ENCODE measurements at regions of chr4 and their contacts with region 1.

Region 1: DNA sequence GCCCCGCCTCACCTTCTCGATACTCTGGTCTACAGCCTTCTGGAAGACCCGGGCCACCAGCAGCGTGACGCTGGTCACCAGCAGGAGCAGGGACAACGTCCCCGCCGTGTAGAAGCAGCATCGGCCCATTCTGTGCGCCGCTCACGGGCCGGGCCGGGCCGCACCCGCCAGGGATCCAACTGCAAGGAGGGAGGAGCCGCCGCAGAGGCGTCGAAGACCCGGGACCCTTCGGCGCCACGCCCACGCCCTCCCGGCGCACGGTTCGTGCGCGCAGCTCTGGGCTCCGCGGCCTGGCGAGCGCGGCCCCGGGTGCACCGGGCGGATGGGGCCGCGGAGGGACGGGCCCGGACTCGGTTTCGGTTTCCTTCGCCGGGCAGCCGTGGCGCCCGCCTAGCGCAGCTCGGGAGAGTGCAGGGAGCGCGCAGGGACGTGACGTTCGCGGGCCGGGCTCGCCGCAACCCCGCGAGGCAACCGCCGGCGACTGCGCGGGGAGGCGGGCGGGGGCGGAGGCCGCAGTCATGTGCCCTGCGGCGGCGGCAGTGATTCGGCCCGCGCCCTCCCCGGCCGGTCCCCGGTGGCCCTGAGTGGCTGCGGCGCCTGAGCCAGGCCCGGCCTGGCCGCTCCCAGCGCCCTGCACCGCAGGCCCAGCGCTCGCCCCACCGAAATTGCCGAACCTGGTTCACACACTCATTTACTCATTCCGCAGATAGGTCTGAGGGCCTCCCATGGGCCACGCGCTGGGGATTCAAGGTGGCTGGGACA is at the start of gene SCARB2:
- DNase-seq: peak; percentile 95
- H3K4me3 ChIP-seq: peak within 1 kb of the TSS; percentile 61 to 79 (median 73)
- H3K27ac ChIP-seq: peak within 1 kb of the TSS; percentile 93 to 99 (median 96)
- H3K4me1 ChIP-seq: peaks cover 0 to 57% (median 51%) of the 10 kb centered on the region in 4 donors
- H3K27me3 ChIP-seq: no peaks in the 10 kb centered on the region
- CTCF ChIP-seq: no peak
- EP300 ChIP-seq: no peak
- POLR2A ChIP-seq: peak; percentile 24 to 58
- total RNA-seq, gene SCARB2: 119 to 160 (median 141) TPM

Region 2: GRCh38 chr4:76067652-76068286 is 145.8 kb before region 1 on chr4:
- intact Hi-C with region 1: no loop called
- DNase-seq: peak; percentile 75
- H3K4me3 ChIP-seq: no peak overlapping the region
- H3K27ac ChIP-seq: no peak overlapping the region
- H3K4me1 ChIP-seq: peaks cover 0 to 4% (median 0%) of the 10 kb centered on the region in 4 donors
- H3K27me3 ChIP-seq: no peaks in the 10 kb centered on the region
- CTCF ChIP-seq: peak; percentile 46 to 77 (median 60)
- EP300 ChIP-seq: no peak
- POLR2A ChIP-seq: no peak

Region 3: DNA sequence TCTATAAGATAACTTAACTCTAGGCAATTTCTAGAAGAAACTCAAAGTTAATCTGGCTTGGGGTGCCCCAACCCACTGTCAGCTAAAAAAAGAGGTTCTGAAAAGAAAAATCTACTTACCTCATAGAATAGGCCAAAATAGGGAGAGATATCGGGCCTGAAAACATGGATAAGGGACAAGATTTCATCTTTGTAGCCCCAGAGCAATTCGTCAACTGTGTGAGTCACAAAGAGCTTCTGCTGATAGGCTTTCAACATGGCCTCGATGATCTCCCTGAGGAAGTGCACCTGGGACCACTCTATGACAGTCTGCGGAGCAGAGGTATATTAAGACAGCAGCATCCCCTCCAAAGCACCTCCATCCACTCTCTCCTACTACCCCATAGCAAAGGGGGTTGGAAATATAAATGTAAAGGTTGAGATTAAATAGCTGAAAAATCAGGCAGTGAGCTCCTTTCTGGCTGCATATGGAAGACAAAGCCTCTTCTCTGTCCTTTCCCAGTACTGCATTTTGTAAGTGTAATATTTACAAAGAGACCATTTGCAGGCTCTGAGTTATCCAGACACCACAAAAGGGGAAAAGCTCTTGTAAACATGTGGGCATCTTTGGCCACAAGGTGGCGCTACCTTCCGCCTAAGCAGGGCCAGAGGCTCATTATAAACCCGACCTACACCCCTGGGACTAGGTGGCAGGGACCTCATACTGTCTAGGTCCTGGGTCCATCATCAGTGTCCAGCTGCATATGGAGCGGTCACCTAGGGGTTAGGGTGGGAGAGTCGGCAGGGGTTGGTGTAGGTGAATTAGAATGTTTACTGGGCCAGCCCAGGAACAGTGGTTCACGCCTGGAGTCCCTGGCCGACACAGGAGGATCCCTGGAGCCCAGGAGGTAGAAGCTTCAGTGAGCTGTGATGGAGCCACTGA is 33.9 kb before region 1 on chr4:
- intact Hi-C with region 1: loop called (anchors 1 kb)
- DNase-seq: peak; percentile 92
- H3K4me3 ChIP-seq: no peak overlapping the region
- H3K27ac ChIP-seq: peak overlapping the region in 2 of 4 donors; percentile 34 to 37
- H3K4me1 ChIP-seq: peaks cover 0 to 17% (median 9%) of the 10 kb centered on the region in 4 donors
- H3K27me3 ChIP-seq: no peaks in the 10 kb centered on the region
- CTCF ChIP-seq: peak; percentile 71 to 96 (median 82)
- EP300 ChIP-seq: no peak
- POLR2A ChIP-seq: no peak

Region 4: DNA sequence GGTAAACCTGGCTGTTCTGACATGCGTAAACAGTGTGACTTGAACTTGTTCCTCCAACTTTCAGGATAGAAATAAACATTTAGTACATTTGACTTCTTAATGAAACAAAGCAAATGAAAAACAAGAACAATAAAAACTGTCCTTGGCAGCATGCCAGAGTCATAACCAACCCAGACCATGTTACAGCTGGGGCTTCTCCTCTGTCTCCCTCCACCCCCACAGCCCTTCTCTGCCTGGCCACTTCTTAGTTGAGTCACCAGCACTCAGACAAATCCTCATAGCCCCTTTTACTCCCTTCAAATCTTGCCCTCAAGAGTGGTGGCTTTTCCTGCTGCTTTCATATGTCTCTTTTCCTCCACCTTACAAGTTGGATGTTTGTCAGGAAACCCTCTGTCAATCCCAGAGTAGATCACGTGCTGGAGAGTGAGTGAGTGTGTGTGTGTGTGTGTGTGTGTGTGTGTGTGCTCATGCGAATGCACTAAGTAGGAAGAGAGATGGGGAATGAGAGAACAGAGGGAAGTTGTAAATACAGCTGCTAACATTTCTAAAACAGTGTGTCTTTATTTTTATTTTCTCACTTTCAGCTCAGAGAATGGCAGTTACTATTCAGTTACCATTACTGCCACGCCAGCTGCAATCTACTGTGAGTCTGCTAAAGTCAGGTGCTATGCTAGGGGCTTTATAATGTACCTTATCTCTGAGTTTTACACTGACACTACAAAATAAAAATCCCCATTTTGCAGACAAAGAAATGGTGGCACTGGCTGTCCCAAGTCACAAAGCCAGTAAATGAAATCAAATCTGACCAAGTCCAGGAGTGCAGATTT is 15.0 kb before region 1 on chr4:
- intact Hi-C with region 1: loop called (anchors 2 kb)
- DNase-seq: peak; percentile 94
- H3K4me3 ChIP-seq: peak overlapping the region in 1 of 4 donors; percentile 11
- H3K27ac ChIP-seq: peak overlapping the region; percentile 75 to 86 (median 82)
- H3K4me1 ChIP-seq: peaks cover 0 to 98% (median 89%) of the 10 kb centered on the region in 4 donors
- H3K27me3 ChIP-seq: no peaks in the 10 kb centered on the region
- CTCF ChIP-seq: no peak
- EP300 ChIP-seq: peak in 1 of 4 donors; percentile 32
- POLR2A ChIP-seq: no peak

Region 5: GRCh38 chr4:76251441-76252270 is 38.1 kb after region 1 on chr4 and contains the start of gene FAM47E:
- intact Hi-C with region 1: loop called (anchors 5 kb)
- DNase-seq: peak; percentile 88
- H3K4me3 ChIP-seq: peak within 1 kb of the TSS; percentile 45 to 81 (median 56)
- H3K27ac ChIP-seq: peak within 1 kb of the TSS; percentile 10 to 46 (median 18)
- H3K4me1 ChIP-seq: peaks cover 0 to 16% (median 7%) of the 10 kb centered on the region in 4 donors
- H3K27me3 ChIP-seq: no peaks in the 10 kb centered on the region
- CTCF ChIP-seq: peak in 1 of 4 experiments; percentile 37
- EP300 ChIP-seq: no peak
- POLR2A ChIP-seq: no peak
- total RNA-seq, gene FAM47E: 1.7 to 3.3 (median 2.0) TPM

Region 6: GRCh38 chr4:76748649-76749048 is 535.1 kb after region 1 on chr4:
- intact Hi-C with region 1: loop called (anchors 10 kb)
- DNase-seq: no peak
- H3K4me3 ChIP-seq: no peak overlapping the region
- H3K27ac ChIP-seq: no peak overlapping the region
- H3K4me1 ChIP-seq: peaks cover 0 to 41% (median 25%) of the 10 kb centered on the region in 4 donors
- H3K27me3 ChIP-seq: no peaks in the 10 kb centered on the region
- CTCF ChIP-seq: peak in 1 of 4 experiments; percentile 13
- EP300 ChIP-seq: no peak
- POLR2A ChIP-seq: no peak

Region 7: GRCh38 chr4:77075869-77076799 is 862.5 kb after region 1 on chr4 and contains the start of gene CCNI:
- intact Hi-C with region 1: loop called (anchors 10 kb)
- DNase-seq: peak; percentile 99
- H3K4me3 ChIP-seq: peak within 1 kb of the TSS; percentile 89 to 99 (median 94)
- H3K27ac ChIP-seq: peak within 1 kb of the TSS; percentile 98 to 100 (median 100)
- H3K4me1 ChIP-seq: peaks cover 0 to 42% (median 32%) of the 10 kb centered on the region in 4 donors
- H3K27me3 ChIP-seq: no peaks in the 10 kb centered on the region
- CTCF ChIP-seq: no peak
- EP300 ChIP-seq: peak in 3 of 4 donors; percentile 13 to 63 (median 30)
- POLR2A ChIP-seq: peak; percentile 56 to 74
- total RNA-seq, gene CCNI: 248 to 339 (median 288) TPM